Activated CD4-positive, alpha-beta T cell treated with anti-CD3 and anti-CD28 coated beads, Interleukin-2, amount 10 ng/mL, durations not matched to agents 24 days and 14 days (primary cell): ENCODE measurements at regions of chr16 and their contacts with region 1.

Region 1: GRCh38 chr16:79269211-79269863 is 331.2 kb downstream of the MAF start:
- DNase-seq: peak; percentile 88
- H3K4me3 Mint-ChIP-seq: peak overlapping the region; percentile 56
- H3K27ac Mint-ChIP-seq: peak overlapping the region; percentile 86
- H3K4me1 Mint-ChIP-seq: peaks cover 74% of the 10 kb centered on the region
- H3K27me3 Mint-ChIP-seq: peaks cover 9% of the 10 kb centered on the region

Region 2: DNA sequence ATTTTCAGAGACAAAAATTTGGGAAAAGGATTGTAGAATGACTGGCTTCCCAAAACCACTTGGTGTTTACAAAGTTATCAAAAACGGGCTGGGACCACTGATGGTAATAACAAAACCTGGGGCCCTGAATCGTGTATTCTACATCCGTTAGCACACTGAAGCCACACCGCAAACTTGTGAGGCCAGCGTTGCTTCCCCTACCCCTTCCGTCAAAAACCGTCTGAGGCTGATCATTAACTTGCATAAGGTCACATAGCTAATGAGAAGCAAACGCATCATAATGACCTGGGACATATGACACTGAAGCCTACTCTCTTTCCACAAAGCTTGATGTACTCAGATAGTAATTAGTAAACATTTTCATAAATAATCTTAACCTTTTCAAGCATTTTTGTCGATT is 373.1 kb before region 1 on chr16:
- intact Hi-C with region 1: loop called (anchors 5 kb)
- DNase-seq: no peak
- H3K4me3 Mint-ChIP-seq: no peak overlapping the region
- H3K27ac Mint-ChIP-seq: peak overlapping the region; percentile 56
- H3K4me1 Mint-ChIP-seq: peaks cover 33% of the 10 kb centered on the region
- H3K27me3 Mint-ChIP-seq: peaks cover 2% of the 10 kb centered on the region

Region 3: DNA sequence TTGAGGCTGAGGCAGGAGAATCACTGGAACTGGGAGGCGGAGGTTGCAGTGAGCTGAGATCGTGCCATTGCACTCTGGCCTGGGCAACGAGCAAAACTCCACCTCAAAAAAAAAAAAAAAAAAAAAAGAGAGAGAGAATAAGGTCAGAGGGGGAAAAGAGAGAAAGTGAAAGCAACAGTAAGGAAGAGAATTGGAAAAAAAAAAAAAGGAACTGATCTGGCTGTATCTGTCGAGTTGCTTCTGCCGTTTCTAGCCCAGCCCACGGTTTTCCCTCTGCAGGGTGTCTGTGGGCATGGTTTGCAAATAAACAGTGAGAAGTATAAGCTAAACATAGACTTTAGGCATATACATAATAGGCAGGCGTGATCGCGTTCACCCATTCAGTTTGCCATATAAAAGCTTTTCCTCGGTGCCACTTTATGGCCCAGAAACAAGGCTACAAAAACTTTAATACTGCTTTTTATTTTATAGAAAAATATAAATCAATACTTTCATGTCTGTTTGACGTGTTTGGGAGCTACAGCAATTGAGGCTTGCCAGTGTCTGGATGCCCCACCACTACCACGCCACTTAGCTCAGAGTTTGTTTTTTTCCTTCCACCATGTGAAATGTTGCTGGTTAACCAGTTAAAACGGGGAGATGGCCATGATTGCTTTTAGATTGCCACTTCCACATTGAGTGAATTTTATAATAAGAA is 105.5 kb before region 1 on chr16:
- intact Hi-C with region 1: loop called (anchors 5 kb)
- DNase-seq: peak; percentile 70
- H3K4me3 Mint-ChIP-seq: peak overlapping the region; percentile 57
- H3K27ac Mint-ChIP-seq: peak overlapping the region; percentile 14
- H3K4me1 Mint-ChIP-seq: peaks cover 14% of the 10 kb centered on the region
- H3K27me3 Mint-ChIP-seq: no peaks in the 10 kb centered on the region

Region 4: DNA sequence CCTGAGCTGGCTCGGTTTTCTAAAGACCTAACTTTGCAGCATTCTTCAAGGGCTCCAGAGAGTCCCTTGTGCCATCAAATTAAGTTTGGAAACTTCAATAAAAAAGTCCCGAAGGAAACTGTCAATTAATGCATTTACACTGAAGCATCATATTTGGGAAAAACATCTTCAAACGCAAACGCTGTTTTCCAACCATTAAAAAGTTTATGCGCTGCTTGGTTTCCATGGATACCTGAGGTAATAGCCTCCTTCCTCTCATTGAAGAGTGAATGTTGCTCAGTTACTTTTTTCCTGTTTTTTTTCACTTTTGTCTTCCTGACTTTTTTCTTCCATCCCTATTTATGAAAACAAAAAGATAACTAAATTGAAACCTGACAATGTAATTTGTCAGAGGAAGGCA is 67.9 kb before region 1 on chr16:
- intact Hi-C with region 1: no loop called
- DNase-seq: no peak
- H3K4me3 Mint-ChIP-seq: no peak overlapping the region
- H3K27ac Mint-ChIP-seq: no peak overlapping the region
- H3K4me1 Mint-ChIP-seq: no peaks in the 10 kb centered on the region
- H3K27me3 Mint-ChIP-seq: no peaks in the 10 kb centered on the region

Region 5: DNA sequence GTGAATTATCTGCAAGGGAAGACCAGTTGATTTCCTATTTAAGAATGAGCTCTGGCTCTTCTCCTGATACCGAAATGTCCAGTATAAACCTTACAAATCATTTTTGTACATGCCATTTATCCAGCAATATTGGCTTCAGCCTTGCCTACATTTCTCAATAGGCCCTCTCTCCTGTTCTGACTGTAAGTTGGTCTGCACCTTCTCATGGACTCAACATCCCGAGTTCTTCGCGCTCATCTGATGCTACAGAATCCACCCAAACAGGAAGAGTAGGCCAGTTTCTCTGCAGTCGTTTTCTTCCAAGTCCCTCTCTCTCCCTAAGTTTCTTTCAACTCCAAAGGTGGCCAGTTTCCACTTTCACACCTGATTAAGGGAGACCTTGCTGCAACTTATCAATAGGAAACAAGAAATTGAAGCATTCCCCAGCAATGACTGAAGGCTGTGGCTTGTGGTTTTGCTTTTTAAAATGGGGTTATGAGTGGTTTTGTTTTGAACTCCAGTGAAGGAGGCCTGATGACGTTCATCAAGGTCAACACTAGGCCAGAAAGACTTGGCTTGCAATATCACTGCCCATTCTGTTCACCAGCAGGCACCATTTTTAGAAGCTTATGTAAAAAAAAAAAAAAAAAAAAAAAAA is 51.8 kb before region 1 on chr16:
- intact Hi-C with region 1: loop called (anchors 1 kb)
- DNase-seq: peak; percentile 80
- H3K4me3 Mint-ChIP-seq: peak overlapping the region; percentile 4
- H3K27ac Mint-ChIP-seq: peak overlapping the region; percentile 50
- H3K4me1 Mint-ChIP-seq: peaks cover 22% of the 10 kb centered on the region
- H3K27me3 Mint-ChIP-seq: peaks cover 7% of the 10 kb centered on the region

Region 6: GRCh38 chr16:79250502-79251098 is 18.7 kb before region 1 on chr16:
- intact Hi-C with region 1: no loop called
- DNase-seq: no peak
- H3K4me3 Mint-ChIP-seq: no peak overlapping the region
- H3K27ac Mint-ChIP-seq: no peak overlapping the region
- H3K4me1 Mint-ChIP-seq: no peaks in the 10 kb centered on the region
- H3K27me3 Mint-ChIP-seq: peaks cover 6% of the 10 kb centered on the region

Region 7: GRCh38 chr16:79286646-79287423 is 17.5 kb after region 1 on chr16:
- intact Hi-C with region 1: loop called (anchors 1 kb)
- DNase-seq: peak; percentile 78
- H3K4me3 Mint-ChIP-seq: peak overlapping the region; percentile 35
- H3K27ac Mint-ChIP-seq: peak overlapping the region; percentile 56
- H3K4me1 Mint-ChIP-seq: peaks cover 50% of the 10 kb centered on the region
- H3K27me3 Mint-ChIP-seq: peaks cover 4% of the 10 kb centered on the region